A549 (cell line): ENCODE measurements at regions of chrX and their contacts with region 1.

Region 1: DNA sequence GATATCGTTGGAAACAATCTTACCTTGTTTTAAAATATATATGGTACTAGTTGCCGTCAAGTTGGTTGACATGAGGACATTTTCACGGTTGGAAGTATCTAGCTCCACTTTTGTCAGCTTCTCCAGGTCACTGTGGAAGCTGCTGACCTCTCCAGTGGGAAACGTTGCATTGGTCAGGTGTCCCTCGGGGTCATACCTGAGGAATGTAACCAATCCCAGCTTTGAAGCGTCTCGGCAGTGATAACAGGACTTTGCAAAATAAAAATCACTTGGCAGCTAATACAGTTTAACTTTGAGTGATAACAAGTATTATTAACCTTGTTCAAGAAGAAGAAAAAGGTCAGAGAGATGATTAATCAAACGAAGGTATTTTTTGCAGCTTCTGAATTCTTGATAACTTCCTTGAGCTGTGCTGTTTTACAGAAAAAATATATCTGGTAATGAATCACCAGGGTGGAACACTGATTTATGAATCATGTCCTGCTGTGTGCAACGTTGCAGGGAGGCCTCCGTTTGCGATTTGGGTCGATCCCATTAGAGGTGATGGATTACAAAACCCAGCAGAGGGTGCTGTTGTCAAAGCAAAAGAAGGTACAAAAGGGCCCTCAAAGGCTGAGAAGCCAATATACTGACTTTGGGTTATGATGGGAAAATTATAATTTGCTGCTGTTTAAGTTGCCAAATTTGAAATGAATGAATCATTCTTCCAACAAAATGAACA is 60.1 kb downstream of the SH2D1A start:
- DNase-seq: peak; percentile 68
- ATAC-seq: peak; percentile 94 to 97
- H3K4me3 ChIP-seq: no peak overlapping the region
- H3K27ac ChIP-seq: no peak overlapping the region
- H3K4me1 ChIP-seq: peaks cover 5% of the 10 kb centered on the region; the same call in 2 of the 3 replicates
- CTCF ChIP-seq: peak; percentile 60
- EP300 ChIP-seq: no peak
- POLR2A ChIP-seq: no peak
- RAD21 ChIP-seq: peak; percentile 81 to 82

Region 2: GRCh38 chrX:124651031-124651430 is 244.6 kb after region 1 on chrX:
- CTCF ChIA-PET with region 1: no interaction called
- POLR2A ChIA-PET with region 1: no interaction called
- DNase-seq: no peak
- ATAC-seq: no peak
- H3K4me3 ChIP-seq: no peak overlapping the region
- H3K27ac ChIP-seq: no peak overlapping the region
- H3K4me1 ChIP-seq: no peaks in the 10 kb centered on the region
- CTCF ChIP-seq: no peak
- EP300 ChIP-seq: no peak
- POLR2A ChIP-seq: no peak
- RAD21 ChIP-seq: no peak

Region 3: DNA sequence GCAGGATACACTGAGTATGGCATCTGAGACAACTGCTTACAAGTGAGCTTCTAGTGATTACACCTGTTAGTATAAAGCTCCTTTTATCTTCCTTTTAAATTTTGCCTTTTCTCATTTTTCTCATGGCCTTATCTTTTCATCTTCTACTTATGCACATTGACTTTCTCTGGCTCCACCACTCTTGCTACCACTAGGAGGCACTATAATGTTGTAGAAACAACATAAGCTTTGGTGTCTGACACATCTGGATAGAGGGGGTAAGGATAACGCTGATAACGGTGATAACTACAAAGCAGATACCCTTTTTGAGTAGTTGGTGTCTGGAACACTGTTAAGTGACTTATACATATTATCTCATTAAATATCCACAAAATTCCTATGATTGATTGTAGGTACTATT is 725.8 kb after region 1 on chrX:
- CTCF ChIA-PET with region 1: interaction called, 13 read pairs
- POLR2A ChIA-PET with region 1: no interaction called
- DNase-seq: peak; percentile 3 to 37
- ATAC-seq: peak in 1 of 2 experiments; percentile 77; a peak in 3 of 6 replicates
- H3K4me3 ChIP-seq: no peak overlapping the region
- H3K27ac ChIP-seq: no peak overlapping the region
- H3K4me1 ChIP-seq: no peaks in the 10 kb centered on the region
- CTCF ChIP-seq: peak; percentile 43
- EP300 ChIP-seq: no peak
- POLR2A ChIP-seq: no peak
- RAD21 ChIP-seq: peak; percentile 45 to 64; a peak in 4 of 5 replicates